ENCODE measurements at regions of chr18 and their contacts with region 1.

Region 1: GRCh38 chr18:54269893-54270844 is 852 bp downstream of the POLI start:
- DNase-seq: no peak
- ATAC-seq: peak; percentile 57

Region 2: DNA sequence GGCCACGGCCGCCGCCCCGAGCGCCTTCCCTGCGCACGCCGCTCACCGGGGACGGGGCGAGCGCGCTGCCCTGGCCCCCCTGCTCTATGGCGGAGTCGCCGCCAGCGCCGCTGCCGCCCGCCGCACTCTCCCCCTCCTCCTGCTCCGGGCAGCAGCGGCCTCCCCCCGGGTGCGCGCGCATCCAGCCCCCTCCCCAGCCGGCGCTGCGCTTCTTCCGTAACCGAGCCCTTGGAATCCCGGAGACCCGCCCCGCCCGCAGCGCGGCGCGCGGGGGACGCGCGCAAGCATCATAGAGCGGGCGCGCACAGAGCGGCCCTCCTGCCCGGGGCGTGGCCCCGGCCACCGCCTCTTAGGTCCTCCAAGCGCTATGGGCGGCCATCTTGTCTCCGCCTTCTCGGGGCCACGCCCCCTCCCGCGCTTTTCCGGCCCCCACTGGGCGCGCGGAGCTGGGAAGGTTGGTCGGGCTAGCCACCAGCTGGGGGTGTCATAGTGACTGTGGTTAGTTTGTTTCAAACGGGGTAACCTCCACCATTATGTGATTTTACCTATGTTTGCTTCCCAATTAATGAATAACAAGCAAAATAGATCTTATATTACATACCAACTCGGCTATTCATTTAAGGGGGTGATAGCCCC is 45.7 kb before region 1 on chr18 and contains the start of gene MBD2:
- intact Hi-C with region 1: loop called (anchors 2 kb)
- DNase-seq: peak; percentile 98
- ATAC-seq: peak; percentile 100
- total RNA-seq, gene MBD2: 43.6 TPM